ENCODE measurements at regions of chr11 and their contacts with region 1.

Region 1: DNA sequence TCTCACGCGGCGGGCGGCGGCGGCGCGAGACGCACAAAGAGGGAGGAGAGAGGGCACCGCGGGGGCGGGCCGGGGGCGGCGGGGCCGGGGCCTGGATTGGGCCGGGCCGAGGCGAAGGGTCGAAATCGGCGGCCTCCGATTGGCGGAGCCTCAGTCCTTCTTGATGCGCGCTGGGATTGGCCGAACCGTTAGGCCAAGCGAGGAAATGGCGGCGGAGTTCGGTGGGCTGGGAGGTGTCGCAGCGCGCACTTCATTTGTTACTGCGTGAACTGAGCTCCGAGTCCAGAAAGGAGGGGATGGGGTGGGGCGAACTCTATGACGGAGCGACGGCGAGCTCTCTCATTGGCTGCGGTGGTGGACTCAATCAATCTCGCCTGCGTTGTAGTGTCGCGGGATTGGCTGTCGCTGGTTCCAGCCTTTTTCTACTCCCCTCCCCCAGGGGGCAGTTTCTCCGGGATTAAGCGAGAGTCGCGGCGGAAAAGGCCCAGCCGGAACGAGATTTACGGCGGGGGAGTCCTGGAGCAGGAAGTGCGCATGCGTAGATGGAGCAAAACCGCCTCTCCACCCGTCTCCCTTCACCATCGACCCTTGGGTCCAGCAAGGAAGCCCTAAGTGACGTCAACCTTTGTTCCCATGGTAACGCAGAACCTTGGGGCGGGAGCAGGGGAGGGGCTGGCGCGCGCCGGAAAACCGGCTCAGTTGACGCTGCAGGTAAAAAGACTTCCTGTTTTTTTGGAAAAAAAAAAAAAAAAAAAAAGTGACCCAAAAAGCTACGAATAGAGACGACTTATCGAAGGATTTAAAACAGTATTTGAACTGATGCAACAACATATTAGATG is at the start of gene SF1:
- DNase-seq: peak; percentile 86 to 100 (median 100)
- ATAC-seq: peak; percentile 89
- H3K4me3 ChIP-seq: peak within 1 kb of the TSS; percentile 94
- H3K4me3 Mint-ChIP-seq: peak within 1 kb of the TSS; percentile 90 to 97 (median 94)
- H3K27ac ChIP-seq: peak within 1 kb of the TSS; percentile 99
- H3K27ac Mint-ChIP-seq: peak within 1 kb of the TSS; percentile 98 to 100 (median 99)
- H3K4me1 ChIP-seq: peaks cover 48 to 52% of the 10 kb centered on the region in 2 donors
- H3K4me1 Mint-ChIP-seq: peaks cover 51 to 71% (median 64%) of the 10 kb centered on the region in 7 donors
- H3K27me3 ChIP-seq: no peaks in the 10 kb centered on the region
- H3K27me3 Mint-ChIP-seq: peaks cover 0 to 5% (median 0%) of the 10 kb centered on the region in 5 donors
- total RNA-seq, gene SF1: 462 to 1,612 (median 904) TPM

Region 2: GRCh38 chr11:64185816-64186498 is 592.8 kb before region 1 on chr11 and contains the start of gene STIP1:
- CTCF ChIA-PET with region 1: no interaction called
- POLR2A ChIA-PET with region 1: no interaction called
- intact Hi-C with region 1: loop called in 1 of 2 experiments (anchors 2 kb)
- DNase-seq: peak; percentile 87 to 100 (median 99)
- ATAC-seq: peak; percentile 92
- H3K4me3 ChIP-seq: peak within 1 kb of the TSS; percentile 84
- H3K4me3 Mint-ChIP-seq: peak within 1 kb of the TSS in 9 of 10 donors; percentile 88 to 99 (median 96)
- H3K27ac ChIP-seq: peak within 1 kb of the TSS; percentile 82
- H3K27ac Mint-ChIP-seq: peak within 1 kb of the TSS in 7 of 9 donors; percentile 89 to 99 (median 92)
- H3K4me1 ChIP-seq: peaks cover 11 to 28% of the 10 kb centered on the region in 2 donors
- H3K4me1 Mint-ChIP-seq: peaks cover 19 to 58% (median 46%) of the 10 kb centered on the region in 7 donors
- H3K27me3 ChIP-seq: no peaks in the 10 kb centered on the region
- H3K27me3 Mint-ChIP-seq: peaks cover 0 to 6% (median 0%) of the 10 kb centered on the region in 5 donors
- total RNA-seq, gene STIP1: 45.1 to 243 (median 88.8) TPM

Region 3: GRCh38 chr11:64793271-64794172 is 14.8 kb after region 1 on chr11:
- CTCF ChIA-PET with region 1: interaction called, 3 read pairs
- POLR2A ChIA-PET with region 1: interaction called, 125 read pairs
- intact Hi-C with region 1: no loop called
- DNase-seq: no peak
- ATAC-seq: no peak
- H3K4me3 ChIP-seq: no peak overlapping the region
- H3K4me3 Mint-ChIP-seq: peak overlapping the region in 6 of 10 donors; percentile 12 to 53 (median 27)
- H3K27ac ChIP-seq: peak overlapping the region; percentile 43
- H3K27ac Mint-ChIP-seq: peak overlapping the region; percentile 42 to 92 (median 77)
- H3K4me1 ChIP-seq: peaks cover 0 to 9% of the 10 kb centered on the region in 2 donors
- H3K4me1 Mint-ChIP-seq: peaks cover 15 to 35% (median 26%) of the 10 kb centered on the region in 7 donors
- H3K27me3 ChIP-seq: no peaks in the 10 kb centered on the region
- H3K27me3 Mint-ChIP-seq: no peaks in the 10 kb centered on the region

Region 4: GRCh38 chr11:64854534-64855429 is 76.1 kb after region 1 on chr11:
- CTCF ChIA-PET with region 1: no interaction called
- POLR2A ChIA-PET with region 1: interaction called, 23 read pairs
- intact Hi-C with region 1: no loop called
- DNase-seq: no peak
- ATAC-seq: peak; percentile 35
- H3K4me3 ChIP-seq: no peak overlapping the region
- H3K4me3 Mint-ChIP-seq: peak overlapping the region; percentile 45 to 83 (median 73)
- H3K27ac ChIP-seq: peak overlapping the region; percentile 75
- H3K27ac Mint-ChIP-seq: peak overlapping the region; percentile 78 to 97 (median 93)
- H3K4me1 ChIP-seq: peaks cover 88 to 93% of the 10 kb centered on the region in 2 donors
- H3K4me1 Mint-ChIP-seq: peaks cover 44 to 94% (median 83%) of the 10 kb centered on the region in 7 donors
- H3K27me3 ChIP-seq: no peaks in the 10 kb centered on the region
- H3K27me3 Mint-ChIP-seq: no peaks in the 10 kb centered on the region

Region 5: GRCh38 chr11:64916775-64917662 is 138.3 kb after region 1 on chr11 and contains the start of gene ATG2A:
- CTCF ChIA-PET with region 1: interaction called, 3 read pairs
- POLR2A ChIA-PET with region 1: interaction called, 4 read pairs
- intact Hi-C with region 1: loop called (anchors 1 to 2 kb)
- DNase-seq: peak; percentile 95 to 100 (median 99)
- ATAC-seq: peak; percentile 97
- H3K4me3 ChIP-seq: peak within 1 kb of the TSS; percentile 92
- H3K4me3 Mint-ChIP-seq: peak within 1 kb of the TSS; percentile 88 to 98 (median 91)
- H3K27ac ChIP-seq: peak within 1 kb of the TSS; percentile 83
- H3K27ac Mint-ChIP-seq: peak within 1 kb of the TSS; percentile 81 to 99 (median 91)
- H3K4me1 ChIP-seq: peaks cover 18 to 22% of the 10 kb centered on the region in 2 donors
- H3K4me1 Mint-ChIP-seq: peaks cover 14 to 33% (median 25%) of the 10 kb centered on the region in 7 donors
- H3K27me3 ChIP-seq: no peaks in the 10 kb centered on the region
- H3K27me3 Mint-ChIP-seq: no peaks in the 10 kb centered on the region
- total RNA-seq, gene ATG2A: 30.6 to 105 (median 36.2) TPM

Region 6: GRCh38 chr11:65261591-65262380 is 483.1 kb after region 1 on chr11 and contains the start of gene POLA2:
- CTCF ChIA-PET with region 1: no interaction called
- POLR2A ChIA-PET with region 1: no interaction called
- intact Hi-C with region 1: loop called in 1 of 2 experiments (anchors 1 kb)
- DNase-seq: peak; percentile 94 to 99 (median 98)
- ATAC-seq: peak; percentile 96
- H3K4me3 ChIP-seq: peak within 1 kb of the TSS; percentile 88
- H3K4me3 Mint-ChIP-seq: peak within 1 kb of the TSS; percentile 83 to 95 (median 92)
- H3K27ac ChIP-seq: peak within 1 kb of the TSS; percentile 88
- H3K27ac Mint-ChIP-seq: peak within 1 kb of the TSS; percentile 91 to 98 (median 97)
- H3K4me1 ChIP-seq: peaks cover 9 to 18% of the 10 kb centered on the region in 2 donors
- H3K4me1 Mint-ChIP-seq: peaks cover 20 to 62% (median 50%) of the 10 kb centered on the region in 7 donors
- H3K27me3 ChIP-seq: no peaks in the 10 kb centered on the region
- H3K27me3 Mint-ChIP-seq: peaks cover 0 to 2% (median 0%) of the 10 kb centered on the region in 5 donors
- total RNA-seq, gene POLA2: 13.4 to 51.6 (median 27.8) TPM